ENCODE measurements at regions of chr12 and their contacts with region 1.

Region 1: DNA sequence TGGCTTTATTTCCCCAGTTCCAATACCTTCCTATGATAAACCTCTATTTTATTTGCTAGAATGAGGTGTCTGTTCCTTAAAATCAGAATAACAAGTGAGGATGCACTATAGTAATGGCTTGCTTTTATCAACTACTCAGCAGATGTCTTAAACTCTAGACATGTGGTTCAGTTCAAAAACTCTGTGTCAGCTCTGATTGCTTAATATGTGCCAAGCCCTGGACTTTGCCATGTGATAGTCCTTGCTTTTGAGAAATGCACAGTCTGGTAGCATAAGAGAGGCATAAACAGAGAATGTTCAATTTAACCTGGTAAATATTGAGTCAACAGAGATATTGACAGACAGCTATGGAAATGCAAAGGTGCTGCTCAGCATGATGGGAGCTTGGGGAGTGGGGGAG is 254.8 kb downstream of the PDZRN4 start:
- DNase-seq: no peak
- ATAC-seq: no peak
- H3K4me3 ChIP-seq: no peak overlapping the region
- H3K4me3 Mint-ChIP-seq: no peak overlapping the region
- H3K27ac ChIP-seq: no peak overlapping the region
- H3K27ac Mint-ChIP-seq: no peak overlapping the region
- H3K4me1 ChIP-seq: no peaks in the 10 kb centered on the region
- H3K4me1 Mint-ChIP-seq: no peaks in the 10 kb centered on the region
- H3K27me3 ChIP-seq: no peaks in the 10 kb centered on the region
- H3K27me3 Mint-ChIP-seq: no peaks in the 10 kb centered on the region
- CTCF ChIP-seq: no peak

Region 2: GRCh38 chr12:41234692-41235091 is 208.2 kb before region 1 on chr12:
- CTCF ChIA-PET with region 1: no interaction called
- POLR2A ChIA-PET with region 1: no interaction called
- intact Hi-C with region 1: loop called in 1 of 2 experiments (anchors 10 kb)
- DNase-seq: no peak
- ATAC-seq: no peak
- H3K4me3 ChIP-seq: no peak overlapping the region
- H3K4me3 Mint-ChIP-seq: no peak overlapping the region
- H3K27ac ChIP-seq: no peak overlapping the region
- H3K27ac Mint-ChIP-seq: no peak overlapping the region
- H3K4me1 ChIP-seq: no peaks in the 10 kb centered on the region
- H3K4me1 Mint-ChIP-seq: no peaks in the 10 kb centered on the region
- H3K27me3 ChIP-seq: no peaks in the 10 kb centered on the region
- H3K27me3 Mint-ChIP-seq: no peaks in the 10 kb centered on the region
- CTCF ChIP-seq: no peak

Measured in CD8-positive, alpha-beta T cell (primary cell).